ENCODE measurements at regions of chr10 and their contacts with region 1.

Region 1: DNA sequence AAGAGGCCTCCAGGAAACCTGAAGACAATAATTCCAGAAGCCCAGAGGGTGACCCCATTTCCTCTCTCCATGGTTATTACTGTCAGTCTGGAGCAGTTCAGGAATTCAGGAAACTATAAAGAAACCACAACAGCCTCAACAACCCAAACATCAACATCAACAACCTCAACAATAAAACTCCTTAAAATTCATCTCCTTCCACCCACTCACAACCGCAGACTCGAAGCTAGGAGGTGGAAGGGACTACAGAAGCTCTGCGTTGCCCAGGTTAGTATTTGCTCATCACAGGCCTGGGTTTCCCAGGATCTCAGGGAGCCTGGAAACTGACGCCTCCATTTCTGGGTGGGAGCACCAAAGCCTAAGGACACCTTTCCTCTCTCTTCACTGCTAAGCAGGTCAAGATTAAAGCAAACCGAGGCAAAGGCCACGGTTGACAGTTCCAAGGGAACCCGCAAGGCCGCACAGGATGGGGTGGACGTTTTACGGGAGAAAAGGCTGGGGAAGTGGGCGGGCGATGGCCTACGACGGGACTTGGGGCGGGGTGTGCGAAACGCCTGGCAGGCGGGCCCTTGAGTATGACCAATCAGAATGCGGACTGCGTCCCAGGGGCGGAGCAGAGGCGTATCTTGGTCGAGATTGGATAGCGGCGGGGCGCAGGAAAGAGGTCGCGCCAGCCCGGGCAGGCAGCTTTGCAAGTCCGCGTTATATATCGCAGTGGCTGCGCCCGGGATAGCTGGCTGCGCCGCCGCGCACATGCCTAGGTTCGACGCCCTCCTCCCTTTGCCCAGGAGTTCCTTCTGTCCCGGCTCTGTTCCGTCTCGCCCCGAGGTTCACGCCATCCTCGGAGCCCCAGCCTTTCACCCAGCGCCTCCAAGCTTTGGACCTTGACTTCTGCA is at the start of gene ELOVL3:
- DNase-seq: peak; percentile 87
- H3K4me3 ChIP-seq: peak within 1 kb of the TSS; percentile 16 to 36 (median 31)
- H3K27ac ChIP-seq: peak within 1 kb of the TSS; percentile 24
- H3K4me1 ChIP-seq: peaks cover 26% of the 10 kb centered on the region
- H3K27me3 ChIP-seq: no peaks in the 10 kb centered on the region
- CTCF ChIP-seq: no peak
- total RNA-seq, gene ELOVL3: 0.17 to 0.45 TPM

Region 2: GRCh38 chr10:101512738-101513137 is 713.2 kb before region 1 on chr10:
- CTCF ChIA-PET with region 1: no interaction called
- dilution Hi-C with region 1: no loop called
- in situ Hi-C with region 1: no loop called
- intact Hi-C with region 1: no loop called
- DNase-seq: peak; percentile 16
- H3K4me3 ChIP-seq: no peak overlapping the region
- H3K27ac ChIP-seq: no peak overlapping the region
- H3K4me1 ChIP-seq: no peaks in the 10 kb centered on the region
- H3K27me3 ChIP-seq: no peaks in the 10 kb centered on the region
- CTCF ChIP-seq: no peak

Region 3: GRCh38 chr10:102132563-102133372 is 93.1 kb before region 1 on chr10 and contains the start of gene PPRC1:
- CTCF ChIA-PET with region 1: no interaction called
- dilution Hi-C with region 1: no loop called
- in situ Hi-C with region 1: no loop called
- intact Hi-C with region 1: loop called (anchors 2 kb)
- DNase-seq: peak; percentile 98
- H3K4me3 ChIP-seq: peak within 1 kb of the TSS; percentile 78 to 97 (median 89)
- H3K27ac ChIP-seq: peak within 1 kb of the TSS; percentile 80
- H3K4me1 ChIP-seq: peaks cover 40% of the 10 kb centered on the region
- H3K27me3 ChIP-seq: no peaks in the 10 kb centered on the region
- CTCF ChIP-seq: peak; percentile 76 to 90
- total RNA-seq, gene PPRC1: 14.5 to 69.0 TPM

Region 4: DNA sequence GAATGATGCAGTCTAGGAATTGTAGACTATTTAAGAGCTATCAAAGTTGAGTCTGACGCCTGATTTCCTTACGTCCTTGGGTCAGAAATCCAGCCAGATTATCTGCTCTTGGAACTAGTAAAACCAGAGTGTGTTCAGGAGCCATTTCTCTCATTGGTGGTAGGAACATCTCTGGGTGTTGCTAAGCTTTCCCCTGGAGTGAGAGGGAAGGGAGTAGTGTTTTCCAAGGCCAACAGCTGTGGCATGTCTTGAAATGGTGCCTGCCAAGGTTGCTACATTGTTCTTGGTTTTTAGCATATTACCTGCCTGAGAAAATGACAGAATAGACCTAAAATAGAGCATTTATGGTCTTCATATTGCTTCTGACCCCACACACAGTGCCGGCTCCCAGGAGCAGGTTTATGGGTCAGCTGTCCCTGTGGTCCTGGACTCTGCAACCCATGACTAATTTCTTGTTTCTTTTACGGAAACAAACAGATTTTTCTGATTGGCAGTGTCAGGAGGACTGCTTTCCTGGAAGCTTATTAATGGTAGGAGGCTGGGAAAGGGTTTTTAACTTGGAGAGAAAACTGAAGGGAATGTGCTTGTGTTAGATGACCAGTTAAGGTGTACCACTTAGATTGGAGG is 37.0 kb after region 1 on chr10:
- CTCF ChIA-PET with region 1: no interaction called
- dilution Hi-C with region 1: loop called (anchors 5 kb)
- in situ Hi-C with region 1: no loop called
- intact Hi-C with region 1: no loop called
- DNase-seq: no peak
- H3K4me3 ChIP-seq: no peak overlapping the region
- H3K27ac ChIP-seq: no peak overlapping the region
- H3K4me1 ChIP-seq: peaks cover 7% of the 10 kb centered on the region
- H3K27me3 ChIP-seq: no peaks in the 10 kb centered on the region
- CTCF ChIP-seq: no peak

Region 5: DNA sequence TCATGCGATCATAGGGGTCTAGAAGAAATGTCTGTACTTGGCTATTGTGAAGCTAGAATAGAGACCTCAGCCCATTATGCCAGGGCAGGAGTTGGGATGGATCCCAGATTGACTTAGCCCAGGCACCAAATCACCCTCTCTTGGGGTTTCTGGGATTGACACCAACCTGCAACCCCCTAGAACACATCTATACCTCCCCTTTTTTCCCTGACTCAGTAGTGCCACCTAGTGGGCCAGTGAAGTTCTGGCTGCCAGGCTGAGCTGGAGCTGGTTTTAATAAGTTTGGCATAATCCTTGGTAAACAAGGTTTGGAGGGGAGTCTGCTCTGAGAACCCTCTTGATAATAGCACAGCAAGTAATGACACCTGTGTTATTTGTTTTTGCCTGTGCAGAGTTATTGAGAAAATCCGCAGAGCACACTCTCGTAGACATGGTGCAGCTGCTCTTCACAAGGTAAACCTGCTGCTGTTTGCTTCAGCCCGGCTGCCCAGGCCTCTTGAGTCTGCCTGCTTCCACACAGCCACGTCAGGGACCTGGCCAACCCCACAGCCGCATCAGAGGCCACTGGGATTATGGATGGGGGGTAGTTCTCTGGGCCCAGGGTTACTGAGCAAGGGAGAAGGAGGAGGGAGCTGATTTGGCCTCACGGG is 126.3 kb after region 1 on chr10:
- CTCF ChIA-PET with region 1: interaction called, 23 read pairs
- dilution Hi-C with region 1: loop called (anchors 5 kb)
- in situ Hi-C with region 1: loop called in 1 of 2 experiments (anchors 5 kb)
- intact Hi-C with region 1: loop called (anchors 1 kb)
- DNase-seq: peak; percentile 32
- H3K4me3 ChIP-seq: no peak overlapping the region
- H3K27ac ChIP-seq: no peak overlapping the region
- H3K4me1 ChIP-seq: no peaks in the 10 kb centered on the region
- H3K27me3 ChIP-seq: no peaks in the 10 kb centered on the region
- CTCF ChIP-seq: peak; percentile 93 to 96

Region 6: DNA sequence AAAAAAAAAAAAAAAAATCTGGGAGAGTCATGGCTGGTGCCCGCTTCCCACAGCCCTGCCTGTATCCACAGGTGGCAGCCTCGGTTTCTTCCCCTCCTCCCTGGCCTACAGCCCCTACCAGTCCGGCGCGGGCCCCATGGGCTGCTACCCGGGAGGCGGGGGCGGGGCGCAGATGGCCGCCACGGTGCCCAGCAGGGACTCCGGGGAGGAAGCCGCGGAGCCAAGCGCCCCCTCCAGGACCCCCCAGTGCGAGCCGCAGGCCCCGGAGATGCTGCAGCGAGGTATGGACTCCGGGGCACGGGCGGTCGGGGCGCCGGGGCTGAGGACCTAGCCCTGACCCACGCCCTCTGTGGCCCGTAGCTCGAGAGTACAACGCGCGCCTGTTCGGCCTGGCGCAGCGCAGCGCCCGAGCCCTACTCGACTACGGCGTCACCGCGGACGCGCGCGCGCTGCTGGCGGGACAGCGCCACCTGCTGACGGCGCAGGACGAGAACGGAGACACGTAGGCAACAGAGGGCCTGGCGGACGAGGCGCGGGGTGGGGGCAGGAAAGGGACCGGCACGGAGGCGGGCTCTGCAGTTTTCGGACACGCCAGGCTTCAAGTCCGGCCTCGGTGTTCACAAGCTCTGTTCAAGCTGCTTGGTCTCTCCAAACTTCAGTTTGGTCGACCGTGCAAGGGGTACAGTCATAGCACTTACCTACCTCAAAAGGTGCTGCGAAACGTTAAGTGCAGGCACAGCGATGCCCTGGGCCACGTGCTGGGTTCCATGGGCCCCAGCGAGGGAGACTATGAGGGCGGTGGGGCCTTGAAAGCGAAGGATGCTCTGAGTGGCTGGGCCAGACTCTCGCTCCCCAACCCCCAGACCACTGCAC is 173.6 kb after region 1 on chr10:
- CTCF ChIA-PET with region 1: interaction called, 4 read pairs
- dilution Hi-C with region 1: no loop called
- in situ Hi-C with region 1: no loop called
- intact Hi-C with region 1: loop called (anchors 1 kb)
- DNase-seq: peak; percentile 78
- H3K4me3 ChIP-seq: peak overlapping the region in 2 of 3 experiments; percentile 38 to 50
- H3K27ac ChIP-seq: no peak overlapping the region
- H3K4me1 ChIP-seq: peaks cover 38% of the 10 kb centered on the region
- H3K27me3 ChIP-seq: no peaks in the 10 kb centered on the region
- CTCF ChIP-seq: peak; percentile 73 to 94

Region 7: DNA sequence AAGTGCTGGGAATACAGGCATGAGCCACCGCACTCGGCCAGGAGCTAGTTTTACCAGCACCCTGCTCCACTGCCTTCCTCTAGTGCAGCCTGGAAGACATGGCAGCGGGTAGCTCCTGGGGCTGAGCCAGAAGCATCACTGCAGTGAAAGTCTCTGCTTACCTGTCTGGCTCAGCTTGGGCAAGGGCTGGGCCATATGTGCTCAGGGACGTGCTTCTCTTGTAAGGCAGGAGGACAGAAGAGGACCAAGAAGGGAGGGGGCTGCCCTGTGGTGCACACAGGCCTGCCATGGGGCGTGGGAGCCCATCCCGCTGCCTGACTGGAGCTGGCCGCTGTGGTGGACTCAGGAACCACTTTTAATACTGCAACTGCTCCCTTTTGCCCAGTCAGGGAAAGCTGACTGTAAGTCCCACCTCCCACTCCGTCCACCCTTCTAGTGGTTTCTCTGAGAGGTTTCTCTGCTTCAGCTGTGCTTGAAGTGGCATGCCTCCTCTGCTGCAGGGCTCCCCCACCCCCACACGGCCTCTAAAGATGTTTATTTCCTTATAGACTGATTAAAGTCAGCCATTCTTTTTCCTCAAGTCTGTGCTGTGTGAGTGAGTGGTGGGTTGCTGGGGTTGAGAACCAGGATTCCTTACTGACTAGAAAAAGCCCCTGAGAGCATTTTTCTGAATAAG is 250.7 kb after region 1 on chr10:
- CTCF ChIA-PET with region 1: interaction called, 7 read pairs
- dilution Hi-C with region 1: no loop called
- in situ Hi-C with region 1: no loop called
- intact Hi-C with region 1: loop called (anchors 1 kb)
- DNase-seq: no peak
- H3K4me3 ChIP-seq: no peak overlapping the region
- H3K27ac ChIP-seq: no peak overlapping the region
- H3K4me1 ChIP-seq: no peaks in the 10 kb centered on the region
- H3K27me3 ChIP-seq: no peaks in the 10 kb centered on the region
- CTCF ChIP-seq: no peak

Region 8: GRCh38 chr10:102583435-102584417 is 357.8 kb after region 1 on chr10:
- CTCF ChIA-PET with region 1: no interaction called
- dilution Hi-C with region 1: no loop called
- in situ Hi-C with region 1: loop called in 1 of 2 experiments (anchors 25 kb)
- intact Hi-C with region 1: loop called (anchors 2 kb)
- DNase-seq: peak; percentile 66
- H3K4me3 ChIP-seq: no peak overlapping the region
- H3K27ac ChIP-seq: no peak overlapping the region
- H3K4me1 ChIP-seq: no peaks in the 10 kb centered on the region
- H3K27me3 ChIP-seq: no peaks in the 10 kb centered on the region
- CTCF ChIP-seq: peak; percentile 89 to 91